ENCODE measurements at regions of chr9 and their contacts with region 1.

Region 1: GRCh38 chr9:113807173-113808061 is 68.7 kb upstream of the ZNF618 start:
- DNase-seq: peak; percentile 59 to 81 (median 80)
- ATAC-seq: peak; percentile 83
- H3K4me3 ChIP-seq: no peak overlapping the region
- H3K27ac ChIP-seq: no peak overlapping the region
- H3K4me1 ChIP-seq: peaks cover 0 to 3% of the 10 kb centered on the region in 2 experiments; a peak in 1 of 5 replicates
- H3K27me3 ChIP-seq: peaks cover 0 to 5% of the 10 kb centered on the region in 2 experiments; a peak in 2 of 5 replicates
- CTCF ChIP-seq: peak; percentile 74 to 91 (median 88)
- EP300 ChIP-seq: no peak
- POLR2A ChIP-seq: no peak
- RAD21 ChIP-seq: peak; percentile 43 to 77; a peak in 3 of 4 replicates

Region 2: DNA sequence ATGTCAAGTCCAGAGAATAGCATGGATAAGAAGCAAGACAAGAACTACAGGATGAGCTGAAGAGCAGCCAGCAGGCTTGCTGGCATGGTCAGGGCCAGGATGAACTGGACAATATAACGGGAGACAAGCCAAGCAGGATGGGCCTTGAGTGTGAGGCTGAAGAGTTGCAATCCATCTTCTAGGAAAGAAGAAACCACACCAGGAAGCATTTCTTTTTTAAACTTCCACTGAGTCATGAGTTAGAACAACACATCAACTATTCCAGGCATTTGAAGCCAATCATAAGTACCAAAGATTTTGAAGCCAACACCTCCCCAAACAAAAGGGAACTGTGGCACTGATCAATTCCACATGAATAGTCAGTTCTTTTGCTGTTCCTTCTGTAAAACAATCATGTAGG is 629.3 kb before region 1 on chr9:
- CTCF ChIA-PET with region 1: no interaction called
- POLR2A ChIA-PET with region 1: no interaction called
- in situ Hi-C with region 1: no loop called
- intact Hi-C with region 1: no loop called
- DNase-seq: no peak
- ATAC-seq: no peak
- H3K4me3 ChIP-seq: no peak overlapping the region
- H3K27ac ChIP-seq: no peak overlapping the region
- H3K4me1 ChIP-seq: no peaks in the 10 kb centered on the region
- H3K27me3 ChIP-seq: no peaks in the 10 kb centered on the region
- CTCF ChIP-seq: no peak
- EP300 ChIP-seq: no peak
- POLR2A ChIP-seq: no peak
- RAD21 ChIP-seq: no peak

Region 3: GRCh38 chr9:113876151-113876992 is 69.0 kb after region 1 on chr9 and contains the start of gene ZNF618:
- CTCF ChIA-PET with region 1: interaction called, 3 read pairs
- POLR2A ChIA-PET with region 1: no interaction called
- in situ Hi-C with region 1: no loop called
- intact Hi-C with region 1: loop called (anchors 2 kb)
- DNase-seq: peak; percentile 32 to 72 (median 66)
- ATAC-seq: peak; percentile 70
- H3K4me3 ChIP-seq: peak within 1 kb of the TSS; percentile 87
- H3K27ac ChIP-seq: peak within 1 kb of the TSS; percentile 66
- H3K4me1 ChIP-seq: peaks cover 0 to 14% of the 10 kb centered on the region in 2 experiments; a peak in 2 of 5 replicates
- H3K27me3 ChIP-seq: no peaks in the 10 kb centered on the region; a peak in 3 of 5 replicates
- CTCF ChIP-seq: peak; percentile 3 to 48 (median 32); a peak in 3 of 6 replicates
- EP300 ChIP-seq: no peak
- POLR2A ChIP-seq: no peak
- RAD21 ChIP-seq: no peak
- polyA plus RNA-seq, gene ZNF618: 0.22 to 0.32 TPM

Region 4: GRCh38 chr9:113963017-113963620 is 155.7 kb after region 1 on chr9:
- CTCF ChIA-PET with region 1: interaction called, 13 read pairs
- POLR2A ChIA-PET with region 1: no interaction called
- in situ Hi-C with region 1: no loop called
- intact Hi-C with region 1: loop called (anchors 1 kb)
- DNase-seq: peak; percentile 61 to 78 (median 74)
- ATAC-seq: peak; percentile 96
- H3K4me3 ChIP-seq: no peak overlapping the region
- H3K27ac ChIP-seq: no peak overlapping the region
- H3K4me1 ChIP-seq: no peaks in the 10 kb centered on the region
- H3K27me3 ChIP-seq: no peaks in the 10 kb centered on the region
- CTCF ChIP-seq: peak; percentile 72 to 85 (median 85)
- EP300 ChIP-seq: no peak
- POLR2A ChIP-seq: no peak
- RAD21 ChIP-seq: peak; percentile 46 to 59; a peak in 3 of 4 replicates

Region 5: DNA sequence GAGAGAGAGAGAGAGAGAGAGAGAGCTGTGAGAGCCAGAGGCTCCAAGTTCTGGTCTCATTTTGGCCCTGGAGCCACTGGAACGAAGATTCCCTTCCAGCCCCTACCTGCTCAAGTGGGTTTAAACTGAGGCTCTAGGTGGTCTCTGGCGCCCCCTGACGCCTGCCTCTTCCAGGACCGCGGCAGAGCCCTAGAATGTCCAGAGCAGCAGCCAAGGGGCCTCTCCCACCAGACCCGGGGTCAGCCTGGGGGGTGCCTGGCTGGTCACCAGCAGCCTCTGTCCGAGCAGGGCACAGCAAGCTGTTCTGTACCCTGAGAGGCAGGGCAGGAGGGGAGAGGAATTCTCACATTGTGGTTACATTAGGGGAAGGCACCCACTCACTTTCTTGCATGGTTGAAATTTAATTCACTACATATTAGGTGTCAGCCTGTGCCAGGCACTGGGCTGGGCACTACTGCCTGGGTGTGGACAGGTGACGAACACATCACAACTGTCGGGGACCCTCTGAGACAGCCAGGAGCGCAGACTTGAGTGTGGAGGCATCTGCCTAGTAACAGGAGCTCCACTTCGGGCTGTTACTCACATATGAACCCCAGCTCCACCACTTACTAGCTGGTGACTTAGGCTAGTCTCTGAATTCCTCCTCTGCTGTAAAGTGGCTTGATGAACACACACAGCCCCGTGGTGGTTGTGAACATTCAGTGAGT is 226.1 kb after region 1 on chr9:
- CTCF ChIA-PET with region 1: interaction called, 3 read pairs
- POLR2A ChIA-PET with region 1: no interaction called
- in situ Hi-C with region 1: no loop called
- intact Hi-C with region 1: loop called (anchors 5 kb)
- DNase-seq: peak; percentile 27 to 54 (median 48)
- ATAC-seq: peak; percentile 84
- H3K4me3 ChIP-seq: no peak overlapping the region
- H3K27ac ChIP-seq: no peak overlapping the region
- H3K4me1 ChIP-seq: peaks cover 0 to 2% of the 10 kb centered on the region in 2 experiments; a peak in 2 of 5 replicates
- H3K27me3 ChIP-seq: no peaks in the 10 kb centered on the region
- CTCF ChIP-seq: peak; percentile 51 to 59 (median 59); a peak in 5 of 6 replicates
- EP300 ChIP-seq: no peak
- POLR2A ChIP-seq: no peak
- RAD21 ChIP-seq: peak in 1 of 2 experiments; percentile 55; a peak in 2 of 4 replicates

Region 6: DNA sequence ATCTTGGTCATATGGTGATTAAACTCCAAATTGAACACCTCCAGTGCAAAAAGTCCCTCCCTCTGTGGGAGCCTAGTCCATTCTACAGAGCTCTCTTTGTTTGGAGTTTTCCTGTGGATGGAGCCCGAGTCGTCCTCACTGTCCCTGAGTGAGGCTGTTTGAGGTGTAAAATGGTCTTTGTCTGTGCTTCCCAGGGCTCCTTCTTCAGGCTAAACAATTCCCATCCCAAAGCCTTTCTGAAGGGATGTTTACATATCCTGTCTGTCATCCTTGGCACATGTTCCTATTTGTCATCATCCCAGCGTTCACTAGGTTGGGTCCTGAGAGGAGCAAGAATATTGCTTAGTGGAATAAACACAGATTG is 416.8 kb after region 1 on chr9:
- CTCF ChIA-PET with region 1: no interaction called
- POLR2A ChIA-PET with region 1: no interaction called
- in situ Hi-C with region 1: no loop called
- intact Hi-C with region 1: no loop called
- DNase-seq: no peak
- ATAC-seq: no peak
- H3K4me3 ChIP-seq: no peak overlapping the region
- H3K27ac ChIP-seq: no peak overlapping the region
- H3K4me1 ChIP-seq: no peaks in the 10 kb centered on the region
- H3K27me3 ChIP-seq: peaks cover 12 to 71% of the 10 kb centered on the region in 2 experiments; a peak in 4 of 5 replicates
- CTCF ChIP-seq: no peak
- EP300 ChIP-seq: no peak
- POLR2A ChIP-seq: no peak
- RAD21 ChIP-seq: no peak